WTC11 (cell line): ENCODE measurements at regions of chr18 and their contacts with region 1.

Region 1: GRCh38 chr18:59402432-59403090 is 43.5 kb upstream of the LMAN1 start:
- DNase-seq: peak; percentile 88
- ATAC-seq: peak; percentile 100
- H3K4me3 Mint-ChIP-seq: no peak overlapping the region
- H3K27ac Mint-ChIP-seq: no peak overlapping the region
- H3K4me1 Mint-ChIP-seq: peaks cover 5% of the 10 kb centered on the region
- H3K27me3 Mint-ChIP-seq: peaks cover 8% of the 10 kb centered on the region
- CTCF ChIP-seq: peak; percentile 71

Region 2: DNA sequence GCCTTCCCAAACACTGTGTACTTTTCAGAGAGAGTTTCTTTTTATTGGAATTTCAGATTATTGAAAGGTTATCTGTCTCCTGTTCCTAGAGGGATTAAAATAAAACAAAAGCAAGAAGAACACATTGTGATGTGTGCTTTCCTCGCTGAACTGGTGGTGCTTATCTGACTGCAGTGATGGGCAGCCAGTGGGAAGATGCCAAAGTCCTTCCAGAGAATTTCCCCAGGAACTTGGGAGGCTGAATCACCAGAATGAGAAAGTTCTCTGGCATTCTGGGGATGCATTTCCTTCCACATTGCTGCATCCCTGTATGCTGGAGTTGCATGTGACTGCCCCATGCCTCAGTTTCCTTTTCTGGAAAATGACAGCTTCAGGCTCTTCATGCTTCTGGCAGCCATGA is 316.8 kb before region 1 on chr18:
- CTCF ChIA-PET with region 1: interaction called, 11 read pairs
- POLR2A ChIA-PET with region 1: no interaction called
- DNase-seq: no peak
- ATAC-seq: no peak
- H3K4me3 Mint-ChIP-seq: no peak overlapping the region
- H3K27ac Mint-ChIP-seq: no peak overlapping the region
- H3K4me1 Mint-ChIP-seq: peaks cover 2% of the 10 kb centered on the region
- H3K27me3 Mint-ChIP-seq: peaks cover 10% of the 10 kb centered on the region
- CTCF ChIP-seq: no peak

Region 3: GRCh38 chr18:59268721-59269562 is 133.6 kb before region 1 on chr18:
- CTCF ChIA-PET with region 1: interaction called, 44 read pairs
- POLR2A ChIA-PET with region 1: interaction called, 5 read pairs
- DNase-seq: peak; percentile 84
- ATAC-seq: peak; percentile 48
- H3K4me3 Mint-ChIP-seq: peak overlapping the region; percentile 76
- H3K27ac Mint-ChIP-seq: no peak overlapping the region
- H3K4me1 Mint-ChIP-seq: peaks cover 57% of the 10 kb centered on the region
- H3K27me3 Mint-ChIP-seq: peaks cover 97% of the 10 kb centered on the region
- CTCF ChIP-seq: no peak

Region 4: GRCh38 chr18:59308248-59308937 is 94.2 kb before region 1 on chr18:
- CTCF ChIA-PET with region 1: interaction called, 133 read pairs
- POLR2A ChIA-PET with region 1: interaction called, 3 read pairs
- DNase-seq: peak; percentile 81
- ATAC-seq: peak; percentile 91
- H3K4me3 Mint-ChIP-seq: peak overlapping the region; percentile 48
- H3K27ac Mint-ChIP-seq: no peak overlapping the region
- H3K4me1 Mint-ChIP-seq: no peaks in the 10 kb centered on the region
- H3K27me3 Mint-ChIP-seq: peaks cover 67% of the 10 kb centered on the region
- CTCF ChIP-seq: peak; percentile 20; the same call in 1 of the 2 replicates

Region 5: DNA sequence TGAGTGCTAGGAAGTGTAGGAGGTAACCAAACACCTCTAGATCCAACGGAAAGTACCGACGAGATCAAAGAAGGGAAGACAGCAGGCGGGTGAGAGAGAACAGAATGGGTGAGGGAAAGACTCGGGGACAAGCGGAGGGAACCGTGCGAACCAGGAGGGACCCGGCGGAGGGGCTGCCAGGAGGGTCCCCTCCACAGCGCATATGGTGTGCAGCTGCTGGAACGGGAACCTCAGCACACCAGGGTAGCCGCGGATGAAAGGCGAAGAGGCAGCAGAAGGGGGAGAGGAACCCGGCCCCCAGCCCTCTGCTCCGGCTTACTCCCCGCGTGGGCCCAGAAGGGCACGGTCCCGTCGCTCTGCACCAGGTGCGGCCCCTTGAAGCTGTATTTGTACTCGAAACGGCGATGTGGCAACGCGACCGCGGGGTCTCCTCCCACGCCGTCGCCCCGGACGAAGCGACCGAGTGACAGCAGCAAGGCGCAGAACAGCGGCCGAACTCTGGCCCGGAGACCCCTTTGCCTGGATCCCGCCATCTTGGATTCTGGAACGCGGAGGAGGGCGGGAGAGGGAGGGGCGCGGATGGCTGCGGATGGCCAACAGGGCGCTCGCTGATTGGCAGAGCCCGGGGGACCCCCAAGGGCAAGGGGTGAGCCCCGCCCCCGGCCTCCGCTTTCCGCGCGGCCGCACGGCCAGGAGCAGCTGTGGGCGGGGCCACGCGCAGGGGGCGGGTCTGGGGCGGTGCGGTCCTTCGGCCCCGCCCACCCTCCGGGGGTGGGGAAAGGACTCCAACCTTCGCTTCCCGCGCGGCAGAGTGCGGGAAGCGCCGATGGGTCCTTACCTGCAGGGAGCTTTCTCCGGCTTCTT is 43.6 kb before region 1 on chr18 and contains the start of gene LMAN1:
- CTCF ChIA-PET with region 1: interaction called, 24 read pairs
- POLR2A ChIA-PET with region 1: no interaction called
- DNase-seq: peak; percentile 98
- ATAC-seq: peak; percentile 98
- H3K4me3 Mint-ChIP-seq: peak within 1 kb of the TSS; percentile 100
- H3K27ac Mint-ChIP-seq: peak within 1 kb of the TSS; percentile 99
- H3K4me1 Mint-ChIP-seq: peaks cover 18% of the 10 kb centered on the region
- H3K27me3 Mint-ChIP-seq: peaks cover 45% of the 10 kb centered on the region
- CTCF ChIP-seq: no peak
- total RNA-seq, gene LMAN1: 77.3 to 84.0 TPM (median 78.7 TPM) in 3 replicates

Region 6: GRCh38 chr18:59528861-59529260 is 126.3 kb after region 1 on chr18:
- CTCF ChIA-PET with region 1: no interaction called
- POLR2A ChIA-PET with region 1: no interaction called
- DNase-seq: no peak
- ATAC-seq: no peak
- H3K4me3 Mint-ChIP-seq: no peak overlapping the region
- H3K27ac Mint-ChIP-seq: no peak overlapping the region
- H3K4me1 Mint-ChIP-seq: no peaks in the 10 kb centered on the region
- H3K27me3 Mint-ChIP-seq: no peaks in the 10 kb centered on the region; the same call in 1 of the 2 replicates
- CTCF ChIP-seq: no peak

Region 7: DNA sequence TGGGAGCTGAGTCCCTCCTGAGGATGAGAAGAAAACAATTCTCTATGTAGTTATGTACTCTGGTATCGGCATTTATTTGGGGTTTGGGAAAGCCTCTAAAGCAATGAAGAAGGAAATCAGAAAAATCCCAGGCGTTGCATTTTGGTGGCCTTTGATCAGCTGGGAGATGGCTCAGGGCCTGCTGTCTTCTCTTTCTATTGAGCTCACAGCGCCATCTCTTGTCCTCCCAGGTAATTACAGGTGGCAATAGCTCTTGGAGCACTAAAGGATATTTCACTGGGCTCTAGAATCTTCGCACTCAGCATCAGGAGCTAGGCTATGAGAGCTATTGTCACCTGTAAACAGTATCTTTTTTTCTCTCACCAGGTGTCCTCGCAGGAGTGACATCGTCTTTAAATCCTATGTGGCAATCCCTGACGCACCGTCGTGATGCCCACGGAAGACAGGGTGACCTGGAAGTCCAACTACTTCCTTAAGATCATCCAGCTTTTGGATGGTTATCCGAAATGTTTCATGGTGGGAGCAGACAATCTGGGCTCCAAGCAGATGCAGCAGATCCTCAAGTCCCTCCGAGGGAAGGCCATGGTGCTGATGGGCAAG is 421.1 kb after region 1 on chr18:
- CTCF ChIA-PET with region 1: interaction called, 17 read pairs
- POLR2A ChIA-PET with region 1: no interaction called
- DNase-seq: peak; percentile 86
- ATAC-seq: peak; percentile 97
- H3K4me3 Mint-ChIP-seq: no peak overlapping the region
- H3K27ac Mint-ChIP-seq: no peak overlapping the region
- H3K4me1 Mint-ChIP-seq: peaks cover 6% of the 10 kb centered on the region; the same call in 1 of the 2 replicates
- H3K27me3 Mint-ChIP-seq: no peaks in the 10 kb centered on the region
- CTCF ChIP-seq: peak; percentile 84